ENCODE measurements at regions of chr10 and their contacts with region 1.

Region 1: GRCh38 chr10:32445740-32446535 is at the start of gene CCDC7:
- DNase-seq: peak; percentile 88
- H3K4me3 ChIP-seq: peak within 1 kb of the TSS; percentile 32 to 80 (median 66)
- H3K27ac ChIP-seq: peak within 1 kb of the TSS; percentile 94 to 99 (median 97)
- H3K4me1 ChIP-seq: peaks cover 3 to 13% (median 9%) of the 10 kb centered on the region in 4 donors
- H3K27me3 ChIP-seq: no peaks in the 10 kb centered on the region
- CTCF ChIP-seq: peak in 4 of 5 experiments; percentile 40 to 66 (median 50)
- EP300 ChIP-seq: no peak
- POLR2A ChIP-seq: peak; percentile 86
- total RNA-seq, gene CCDC7: 4.8 to 17.6 (median 13.3) TPM

Region 2: GRCh38 chr10:32378363-32379317 is 67.3 kb before region 1 on chr10:
- in situ Hi-C with region 1: loop called in 2 of 4 experiments (anchors 5 to 10 kb)
- intact Hi-C with region 1: loop called (anchors 10 kb)
- DNase-seq: peak; percentile 96
- H3K4me3 ChIP-seq: peak overlapping the region; percentile 41 to 93 (median 72)
- H3K27ac ChIP-seq: peak overlapping the region; percentile 90 to 98 (median 94)
- H3K4me1 ChIP-seq: peaks cover 6 to 45% (median 24%) of the 10 kb centered on the region in 4 donors
- H3K27me3 ChIP-seq: no peaks in the 10 kb centered on the region
- CTCF ChIP-seq: no peak
- EP300 ChIP-seq: no peak
- POLR2A ChIP-seq: peak; percentile 75

Region 3: GRCh38 chr10:32386623-32387260 is 59.2 kb before region 1 on chr10:
- in situ Hi-C with region 1: loop called in 1 of 4 experiments (anchors 10 kb)
- intact Hi-C with region 1: loop called (anchors 10 kb)
- DNase-seq: no peak
- H3K4me3 ChIP-seq: no peak overlapping the region
- H3K27ac ChIP-seq: no peak overlapping the region
- H3K4me1 ChIP-seq: peaks cover 0 to 22% (median 2%) of the 10 kb centered on the region in 4 donors
- H3K27me3 ChIP-seq: no peaks in the 10 kb centered on the region
- CTCF ChIP-seq: no peak
- EP300 ChIP-seq: no peak
- POLR2A ChIP-seq: no peak

Region 4: GRCh38 chr10:32661341-32661740 is 215.4 kb after region 1 on chr10:
- in situ Hi-C with region 1: no loop called
- intact Hi-C with region 1: no loop called
- DNase-seq: no peak
- H3K4me3 ChIP-seq: no peak overlapping the region
- H3K27ac ChIP-seq: no peak overlapping the region
- H3K4me1 ChIP-seq: no peaks in the 10 kb centered on the region
- H3K27me3 ChIP-seq: no peaks in the 10 kb centered on the region
- CTCF ChIP-seq: no peak
- EP300 ChIP-seq: no peak
- POLR2A ChIP-seq: no peak